Ascending aorta (tissue), 2 donors: ENCODE measurements at regions of chr4 and their contacts with region 1.

Region 1: DNA sequence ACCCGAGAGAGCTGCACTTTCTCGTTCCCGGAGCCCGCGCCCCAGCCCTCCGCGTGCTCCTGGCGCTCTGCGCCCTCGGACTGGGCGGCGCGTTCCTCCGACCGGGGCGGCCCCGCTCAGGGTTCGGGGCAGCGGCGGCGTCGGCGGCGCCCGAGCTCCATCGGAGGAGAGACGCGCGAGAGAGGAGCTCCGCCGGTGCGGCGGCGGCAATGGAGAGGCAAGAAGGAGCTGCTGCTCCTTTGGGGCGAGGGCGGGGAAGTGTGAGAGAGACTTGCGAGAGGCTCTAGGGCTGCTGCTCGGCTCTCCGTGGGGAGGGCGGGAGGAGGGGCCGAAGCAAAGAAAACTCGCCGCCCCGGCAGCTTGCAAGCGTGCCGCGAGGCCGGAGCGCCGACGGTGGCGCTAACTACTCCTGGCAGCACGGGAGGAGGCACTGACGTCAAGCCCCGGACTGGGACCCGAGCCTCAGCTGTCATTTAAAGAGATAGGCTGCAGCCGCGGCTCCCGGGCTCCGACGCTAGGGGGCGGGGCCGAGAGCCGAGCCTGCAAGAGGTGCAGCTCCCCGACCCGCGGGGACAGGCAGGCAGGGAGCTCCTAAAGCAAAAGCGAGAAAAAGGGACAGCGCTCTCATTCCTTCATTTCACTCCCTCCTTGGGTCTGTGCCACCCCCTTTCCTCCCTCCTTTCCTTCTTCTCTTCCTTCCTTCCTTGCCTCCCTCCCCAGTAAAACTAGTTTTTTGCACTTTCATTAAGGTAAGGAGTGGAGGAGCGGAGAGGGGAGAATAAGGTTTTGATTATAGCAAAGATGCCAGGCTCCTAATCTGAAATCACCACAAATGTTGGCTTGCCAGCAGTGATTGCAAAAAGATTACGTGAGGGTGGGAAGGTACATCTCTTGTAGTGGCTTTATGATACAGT is at the start of gene KCTD8:
- DNase-seq: peak; percentile 59 to 93
- H3K4me3 ChIP-seq: peak within 1 kb of the TSS; percentile 58 to 61
- H3K27ac ChIP-seq: peak within 1 kb of the TSS; percentile 55 to 73
- H3K4me1 ChIP-seq: no peaks in the 10 kb centered on the region
- H3K27me3 ChIP-seq: peaks cover 5% of the 10 kb centered on the region
- CTCF ChIP-seq: peak; percentile 12 to 62 (median 61)
- total RNA-seq, gene KCTD8: 0.43 TPM

Region 2: GRCh38 chr4:43089730-43090129 is 1359.1 kb before region 1 on chr4:
- intact Hi-C with region 1: loop called (anchors 5 kb)
- DNase-seq: peak; percentile 14 to 85
- H3K4me3 ChIP-seq: peak overlapping the region; percentile 14 to 33
- H3K27ac ChIP-seq: peak overlapping the region; percentile 70 to 77
- H3K4me1 ChIP-seq: peaks cover 4 to 8% of the 10 kb centered on the region in 2 donors
- H3K27me3 ChIP-seq: no peaks in the 10 kb centered on the region
- CTCF ChIP-seq: no peak

Region 3: DNA sequence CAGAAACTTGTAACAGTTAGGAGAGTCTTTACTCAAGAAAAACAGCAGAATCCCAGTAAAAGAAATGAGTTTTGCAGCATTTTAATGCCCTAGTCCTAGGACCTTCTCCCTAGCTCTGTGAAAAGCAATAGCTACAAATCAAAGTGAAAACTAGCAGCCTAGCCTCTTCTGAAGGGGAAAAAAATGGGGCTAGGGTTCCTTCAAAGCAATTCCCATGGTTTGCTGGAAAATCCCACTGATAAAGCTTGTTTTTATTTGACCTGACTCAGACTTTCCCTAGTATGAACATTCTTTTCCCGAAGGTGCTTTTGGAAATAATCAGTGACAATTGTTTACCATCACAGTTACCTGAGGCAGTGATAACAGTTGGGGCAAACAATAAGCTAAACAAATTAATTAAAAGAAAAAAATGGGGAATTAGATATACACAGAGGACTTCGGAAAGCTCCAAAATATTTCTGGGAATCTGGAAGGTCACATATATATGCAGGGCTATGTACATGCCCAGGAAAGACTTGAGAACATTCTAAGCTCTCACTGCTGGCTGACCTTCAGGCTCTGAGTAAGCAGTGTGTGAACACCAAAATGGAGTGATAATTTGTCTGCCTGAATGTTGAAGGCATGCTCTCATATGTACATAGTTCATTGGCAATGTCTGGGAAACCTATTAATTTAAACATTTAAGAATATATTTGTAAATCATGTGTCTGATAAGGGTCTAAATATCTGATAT is 286.1 kb before region 1 on chr4:
- intact Hi-C with region 1: no loop called
- DNase-seq: no peak
- H3K4me3 ChIP-seq: no peak overlapping the region
- H3K27ac ChIP-seq: no peak overlapping the region
- H3K4me1 ChIP-seq: no peaks in the 10 kb centered on the region
- H3K27me3 ChIP-seq: no peaks in the 10 kb centered on the region
- CTCF ChIP-seq: no peak

Region 4: GRCh38 chr4:44221407-44221806 is 227.4 kb before region 1 on chr4:
- intact Hi-C with region 1: no loop called
- DNase-seq: no peak
- H3K4me3 ChIP-seq: no peak overlapping the region
- H3K27ac ChIP-seq: no peak overlapping the region
- H3K4me1 ChIP-seq: no peaks in the 10 kb centered on the region
- H3K27me3 ChIP-seq: no peaks in the 10 kb centered on the region
- CTCF ChIP-seq: no peak

Region 5: GRCh38 chr4:44532851-44533250 is 84.0 kb after region 1 on chr4:
- intact Hi-C with region 1: no loop called
- DNase-seq: no peak
- H3K4me3 ChIP-seq: no peak overlapping the region
- H3K27ac ChIP-seq: no peak overlapping the region
- H3K4me1 ChIP-seq: no peaks in the 10 kb centered on the region
- H3K27me3 ChIP-seq: no peaks in the 10 kb centered on the region
- CTCF ChIP-seq: no peak

Region 6: DNA sequence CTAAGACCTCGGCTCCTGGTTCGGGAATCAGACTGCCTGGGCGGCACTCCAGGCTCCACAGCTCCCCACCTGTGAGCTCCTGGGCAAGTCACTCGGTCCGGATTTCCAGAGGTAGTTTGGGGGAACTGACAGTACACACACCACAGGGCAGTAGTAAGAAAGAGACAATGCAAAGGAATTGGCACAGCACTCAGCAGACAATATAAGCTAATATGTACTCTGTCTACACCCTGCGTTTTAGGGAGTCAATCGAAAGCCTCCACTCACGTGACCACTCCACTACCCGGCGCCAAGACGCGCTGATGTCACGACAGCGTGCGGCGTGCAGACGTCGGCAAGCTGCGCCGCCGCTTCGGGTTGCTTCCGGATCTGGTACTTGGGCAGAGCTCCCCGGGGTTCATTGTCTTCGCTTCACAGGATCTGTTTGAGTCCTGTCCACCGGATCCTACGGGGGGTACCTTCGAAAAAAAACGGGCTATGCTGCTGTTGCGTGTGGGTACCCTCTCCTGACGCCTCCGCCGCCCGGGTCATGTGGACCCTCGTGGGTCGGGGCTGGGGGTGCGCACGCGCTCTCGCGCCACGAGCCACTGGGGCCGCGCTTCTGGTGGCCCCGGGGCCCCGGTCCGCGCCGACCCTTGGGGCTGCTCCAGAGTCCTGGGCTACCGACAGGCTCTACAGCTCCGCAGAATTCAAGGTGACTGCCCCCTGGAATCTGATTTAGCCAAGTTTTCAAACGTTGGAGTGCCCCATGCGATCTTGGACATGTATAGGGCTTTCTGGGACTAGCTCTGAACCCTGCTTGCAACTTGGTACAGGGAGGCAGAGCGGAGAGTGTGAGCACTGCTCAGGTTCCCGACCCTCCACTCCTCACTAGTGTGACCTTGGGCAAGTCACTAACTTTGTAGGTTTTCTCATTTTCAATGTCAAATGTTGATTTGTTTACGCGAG is 229.6 kb after region 1 on chr4 and contains the start of gene GUF1:
- intact Hi-C with region 1: loop called (anchors 5 kb)
- DNase-seq: peak; percentile 67 to 94
- H3K4me3 ChIP-seq: peak within 1 kb of the TSS; percentile 93 to 97
- H3K27ac ChIP-seq: peak within 1 kb of the TSS; percentile 88 to 93
- H3K4me1 ChIP-seq: peaks cover 0 to 10% of the 10 kb centered on the region in 2 donors
- H3K27me3 ChIP-seq: no peaks in the 10 kb centered on the region
- CTCF ChIP-seq: peak in 1 of 3 experiments; percentile 4
- total RNA-seq, gene GUF1: 14.5 TPM

Region 7: GRCh38 chr4:44726262-44726871 is 277.6 kb after region 1 on chr4 and contains the start of gene GNPDA2:
- intact Hi-C with region 1: loop called (anchors 5 kb)
- DNase-seq: peak; percentile 71 to 96
- H3K4me3 ChIP-seq: peak within 1 kb of the TSS; percentile 81 to 88
- H3K27ac ChIP-seq: peak within 1 kb of the TSS; percentile 65 to 83
- H3K4me1 ChIP-seq: no peaks in the 10 kb centered on the region
- H3K27me3 ChIP-seq: no peaks in the 10 kb centered on the region
- CTCF ChIP-seq: peak in 2 of 3 experiments; percentile 16 to 41
- total RNA-seq, gene GNPDA2: 32.6 TPM